K562 (cell line): ENCODE measurements at regions of chr6 and their contacts with region 1.

Region 1: DNA sequence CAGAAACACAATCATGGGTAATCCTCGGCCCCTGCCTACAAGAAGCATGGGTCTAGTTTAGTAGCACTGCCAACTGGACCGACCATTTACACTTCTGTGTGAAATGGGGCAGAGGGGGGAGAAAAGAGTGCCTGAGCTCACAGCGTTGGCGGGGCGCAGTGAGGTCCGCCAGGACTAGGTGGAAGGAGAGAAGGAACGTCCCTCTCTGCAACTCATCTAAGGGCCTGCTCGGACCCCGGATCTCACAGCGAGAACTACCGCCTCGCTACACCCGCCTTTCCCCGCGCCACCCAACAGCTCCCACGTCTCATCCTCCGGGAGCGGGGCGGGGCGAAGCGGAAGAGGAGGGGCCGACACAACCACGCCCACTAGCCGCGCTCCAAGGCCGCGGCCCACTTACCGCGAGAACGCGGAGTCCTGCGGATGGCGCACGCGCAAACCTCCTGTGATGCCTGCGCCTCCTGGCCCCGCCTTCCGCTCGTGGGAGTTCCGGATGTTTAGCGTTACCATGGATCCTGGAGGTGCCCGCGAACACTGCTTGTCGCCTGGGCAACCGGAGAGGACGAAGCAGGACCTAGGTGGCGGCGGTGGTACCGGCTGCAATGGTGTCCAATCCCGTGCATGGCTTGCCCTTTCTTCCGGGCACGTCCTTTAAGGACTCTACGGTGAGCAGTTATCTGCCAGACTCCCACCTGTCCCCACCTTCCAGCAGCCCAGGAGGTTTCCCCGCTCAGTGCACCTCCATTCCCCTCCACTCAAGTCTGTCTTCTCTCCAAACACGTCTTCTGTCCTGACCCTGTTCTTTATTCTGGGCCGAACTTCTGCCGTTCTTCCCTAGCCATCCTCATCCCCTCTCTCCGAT is at the start of gene EFHC1:
- DNase-seq: peak; percentile 97 to 99 (median 98)
- ATAC-seq: peak; percentile 96
- H3K4me3 ChIP-seq: peak within 1 kb of the TSS; percentile 69
- H3K27ac ChIP-seq: peak within 1 kb of the TSS; percentile 75
- H3K4me1 ChIP-seq: peaks cover 24 to 31% of the 10 kb centered on the region in 2 experiments
- H3K27me3 ChIP-seq: no peaks in the 10 kb centered on the region; a peak in 1 of 5 replicates
- CTCF ChIP-seq: peak in 1 of 3 experiments; percentile 29; a peak in 1 of 6 replicates
- EP300 ChIP-seq: no peak
- POLR2A ChIP-seq: peak; percentile 93
- RAD21 ChIP-seq: peak in 1 of 2 experiments; percentile 15; a peak in 1 of 4 replicates
- polyA plus RNA-seq, gene EFHC1: 15.7 to 17.2 TPM

Region 2: DNA sequence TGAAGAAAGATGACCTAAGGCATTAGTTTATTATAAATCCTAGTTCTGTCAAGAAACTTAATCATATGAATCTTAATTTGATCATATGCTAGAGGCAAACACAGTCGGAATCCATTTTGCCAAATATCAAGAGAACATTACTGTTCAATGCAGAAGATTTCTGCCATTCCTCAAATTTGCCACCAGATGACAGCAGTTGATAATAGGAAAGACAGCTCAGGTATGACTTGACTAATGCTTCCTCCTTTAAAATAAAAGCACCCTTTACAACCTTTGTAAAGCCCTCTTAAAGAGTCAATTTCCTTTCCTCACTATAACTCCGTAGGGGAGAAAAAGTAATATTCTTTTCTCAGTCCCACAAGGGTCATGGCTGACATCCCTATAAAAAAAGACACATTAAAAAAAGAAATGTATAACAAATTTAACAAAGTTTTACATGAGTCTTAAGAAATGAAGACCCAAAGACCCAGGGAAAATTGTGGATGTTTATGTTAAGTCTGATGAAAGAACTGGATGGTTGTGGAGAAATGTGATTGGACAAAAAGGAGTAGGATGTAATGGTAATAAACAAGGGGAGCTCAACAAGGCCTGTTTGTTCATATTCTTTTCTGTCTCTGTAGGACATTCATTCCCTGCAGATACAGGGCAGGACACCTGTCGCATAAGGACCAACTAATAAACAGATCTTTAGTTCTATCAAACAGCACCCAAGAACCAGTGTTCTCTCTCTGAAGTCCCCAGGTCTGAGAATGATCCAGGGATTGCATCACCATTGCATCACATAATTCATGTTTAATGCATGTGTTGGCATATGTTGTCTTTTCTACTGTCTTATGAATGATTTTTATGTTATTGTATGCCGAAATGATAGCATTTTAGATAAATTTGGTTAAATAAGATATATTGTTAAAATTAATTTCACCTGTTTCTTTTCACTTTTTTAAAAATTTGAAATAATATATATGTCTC is 256.8 kb before region 1 on chr6:
- CTCF ChIA-PET with region 1: no interaction called
- POLR2A ChIA-PET with region 1: no interaction called
- in situ Hi-C with region 1: no loop called
- intact Hi-C with region 1: loop called (anchors 5 kb)
- DNase-seq: peak in 1 of 4 experiments; percentile 24
- ATAC-seq: peak; percentile 82
- H3K4me3 ChIP-seq: no peak overlapping the region
- H3K27ac ChIP-seq: no peak overlapping the region
- H3K4me1 ChIP-seq: no peaks in the 10 kb centered on the region; a peak in 1 of 5 replicates
- H3K27me3 ChIP-seq: no peaks in the 10 kb centered on the region
- CTCF ChIP-seq: peak; percentile 25 to 79 (median 52); a peak in 4 of 6 replicates
- EP300 ChIP-seq: no peak
- POLR2A ChIP-seq: no peak
- RAD21 ChIP-seq: peak; percentile 83 to 86

Region 3: DNA sequence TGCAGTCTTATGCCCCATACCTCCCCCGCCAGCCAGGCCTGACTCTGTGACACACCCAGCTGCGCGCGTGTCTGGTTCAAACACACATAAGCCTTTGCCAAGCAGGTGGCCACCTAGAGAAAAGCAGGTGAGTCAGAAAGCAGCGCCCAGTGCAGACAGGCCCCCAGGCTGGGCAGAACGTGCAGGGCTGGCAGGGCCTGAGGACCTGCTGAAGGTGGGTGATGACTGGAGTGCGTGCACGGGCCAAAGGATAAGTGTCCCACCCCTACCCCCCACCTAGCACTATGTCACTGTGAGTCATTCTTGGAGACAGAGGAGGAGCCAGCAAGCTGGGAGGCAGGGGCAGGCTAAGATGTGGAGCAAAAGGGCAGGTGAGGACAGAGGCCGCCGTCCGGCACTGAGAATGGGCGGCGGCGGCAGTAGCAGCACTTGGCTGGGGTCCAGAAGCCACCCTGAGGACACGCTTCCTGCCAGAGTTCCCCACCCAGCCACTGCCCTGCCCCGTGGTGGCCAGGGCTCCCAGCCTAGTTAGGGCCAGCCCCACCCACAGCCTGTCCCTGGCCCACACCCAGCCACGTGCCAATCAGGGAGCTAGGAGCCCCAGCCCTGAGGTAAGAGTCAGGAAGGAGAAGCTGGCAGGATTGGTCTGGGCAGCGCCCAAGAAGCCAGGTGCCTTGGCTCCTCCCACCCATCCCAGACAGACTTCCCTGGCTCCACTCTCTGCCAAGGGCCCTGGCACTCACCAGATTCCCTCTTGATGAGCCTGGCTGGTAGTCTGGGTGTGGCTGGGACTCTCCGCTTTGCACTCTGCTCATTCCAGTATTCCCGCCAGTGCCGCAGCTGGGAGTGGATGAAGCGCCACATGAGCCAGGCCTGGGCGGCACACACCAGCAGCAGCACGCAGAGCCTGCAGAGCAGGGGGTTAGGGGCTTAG is 84.1 kb after region 1 on chr6:
- CTCF ChIA-PET with region 1: interaction called, 3 read pairs
- POLR2A ChIA-PET with region 1: no interaction called
- in situ Hi-C with region 1: no loop called
- intact Hi-C with region 1: loop called (anchors 2 kb)
- DNase-seq: peak; percentile 90 to 92 (median 90)
- ATAC-seq: peak; percentile 95
- H3K4me3 ChIP-seq: no peak overlapping the region
- H3K27ac ChIP-seq: peak overlapping the region; percentile 73
- H3K4me1 ChIP-seq: peaks cover 33 to 49% of the 10 kb centered on the region in 2 experiments
- H3K27me3 ChIP-seq: no peaks in the 10 kb centered on the region
- CTCF ChIP-seq: no peak; a peak in 1 of 6 replicates
- EP300 ChIP-seq: peak; percentile 68; the same call in 1 of the 2 replicates
- POLR2A ChIP-seq: no peak; the same call in 1 of the 2 replicates
- RAD21 ChIP-seq: no peak; a peak in 1 of 4 replicates

Region 4: DNA sequence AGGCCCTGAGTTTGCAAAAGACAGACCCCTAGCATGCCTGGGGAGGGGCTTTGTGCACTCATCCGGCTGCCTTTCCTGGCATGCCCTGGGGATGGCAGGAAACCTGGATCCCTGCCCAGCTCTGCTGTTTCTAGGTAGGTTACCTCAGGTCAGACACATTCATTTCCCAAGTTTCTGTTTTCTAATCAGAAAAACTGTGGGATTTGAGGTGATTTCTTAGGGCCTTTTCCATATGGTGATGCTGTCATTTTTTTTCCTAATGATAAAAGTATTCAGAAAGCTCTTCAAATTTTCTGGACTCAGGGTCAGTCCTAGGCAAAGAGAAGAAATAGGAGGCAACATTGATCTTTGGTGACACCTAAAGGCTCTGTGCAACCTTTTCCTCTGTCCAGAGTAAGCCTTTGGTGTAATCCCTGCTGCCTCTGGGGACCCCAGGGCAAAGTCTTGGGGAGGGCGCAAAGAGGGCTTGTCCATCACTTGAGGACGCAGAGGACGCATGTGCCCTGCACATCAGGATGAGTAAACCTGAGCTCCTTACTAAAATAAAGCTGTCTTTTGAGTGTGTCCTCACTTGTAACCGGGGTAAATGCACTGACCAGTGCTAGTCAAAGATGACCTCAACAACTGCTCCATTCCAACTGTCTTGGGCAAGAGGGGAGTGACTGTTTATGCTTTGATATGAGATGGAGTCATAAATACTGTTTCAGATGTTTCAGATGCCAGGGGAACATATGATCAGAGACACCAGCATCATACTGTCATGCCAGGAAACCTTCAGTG is 170.3 kb after region 1 on chr6:
- CTCF ChIA-PET with region 1: interaction called, 14 read pairs
- POLR2A ChIA-PET with region 1: interaction called, 3 read pairs
- in situ Hi-C with region 1: loop called (anchors 5 kb)
- intact Hi-C with region 1: loop called (anchors 1 kb)
- DNase-seq: no peak
- ATAC-seq: peak; percentile 86
- H3K4me3 ChIP-seq: no peak overlapping the region
- H3K27ac ChIP-seq: no peak overlapping the region
- H3K4me1 ChIP-seq: peaks cover 0 to 8% of the 10 kb centered on the region in 2 experiments; a peak in 2 of 5 replicates
- H3K27me3 ChIP-seq: no peaks in the 10 kb centered on the region; a peak in 1 of 5 replicates
- CTCF ChIP-seq: peak; percentile 32 to 55 (median 34); a peak in 5 of 6 replicates
- EP300 ChIP-seq: no peak
- POLR2A ChIP-seq: no peak
- RAD21 ChIP-seq: peak; percentile 58 to 76

Region 5: DNA sequence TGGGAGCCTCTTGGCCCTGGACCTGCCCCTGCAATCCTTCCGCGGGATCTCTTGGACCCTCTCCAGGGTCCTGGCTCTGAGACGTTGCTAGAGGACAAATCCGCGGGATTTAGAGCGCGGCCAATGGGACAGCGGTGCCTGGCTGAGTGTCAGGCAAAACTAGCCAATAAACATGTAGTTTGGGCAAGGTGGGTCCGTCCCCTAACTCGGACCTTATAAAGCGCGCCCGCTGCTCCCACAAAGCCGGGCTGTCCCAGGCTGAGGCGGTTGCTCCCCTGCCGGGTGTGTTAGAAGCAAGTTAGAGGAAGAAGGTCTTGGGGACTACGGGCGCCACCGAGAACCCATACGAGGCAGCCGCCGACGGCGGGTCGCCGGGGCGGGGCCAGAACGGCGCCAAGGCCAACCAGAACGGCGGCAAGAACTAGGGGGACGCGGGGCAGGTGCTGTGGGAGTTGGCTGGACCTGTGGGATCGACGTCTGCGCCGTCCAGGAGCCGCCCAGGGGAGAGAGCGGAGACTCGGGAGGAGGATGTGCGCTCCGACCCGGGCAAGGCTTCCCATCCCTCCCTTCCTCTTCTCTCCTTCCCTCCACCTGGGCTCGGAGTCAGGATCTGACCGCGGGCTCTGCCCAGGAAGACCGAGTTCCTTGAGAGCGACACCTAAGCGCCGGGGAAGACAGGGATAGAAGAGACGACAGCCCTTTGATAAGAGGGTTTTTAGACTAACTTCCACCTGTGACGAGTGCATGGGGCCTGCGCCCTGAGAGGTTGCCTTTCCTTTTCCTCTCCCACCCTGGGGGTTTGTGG is 244.3 kb after region 1 on chr6:
- CTCF ChIA-PET with region 1: interaction called, 74 read pairs
- POLR2A ChIA-PET with region 1: interaction called, 6 read pairs
- in situ Hi-C with region 1: loop called (anchors 5 kb)
- intact Hi-C with region 1: loop called (anchors 1 kb)
- DNase-seq: peak; percentile 90 to 98 (median 94)
- ATAC-seq: peak; percentile 98
- H3K4me3 ChIP-seq: peak overlapping the region; percentile 63
- H3K27ac ChIP-seq: peak overlapping the region; percentile 59
- H3K4me1 ChIP-seq: peaks cover 7 to 13% of the 10 kb centered on the region in 2 experiments; a peak in 4 of 5 replicates
- H3K27me3 ChIP-seq: no peaks in the 10 kb centered on the region
- CTCF ChIP-seq: no peak
- EP300 ChIP-seq: no peak
- POLR2A ChIP-seq: peak; percentile 94
- RAD21 ChIP-seq: no peak

Region 6: DNA sequence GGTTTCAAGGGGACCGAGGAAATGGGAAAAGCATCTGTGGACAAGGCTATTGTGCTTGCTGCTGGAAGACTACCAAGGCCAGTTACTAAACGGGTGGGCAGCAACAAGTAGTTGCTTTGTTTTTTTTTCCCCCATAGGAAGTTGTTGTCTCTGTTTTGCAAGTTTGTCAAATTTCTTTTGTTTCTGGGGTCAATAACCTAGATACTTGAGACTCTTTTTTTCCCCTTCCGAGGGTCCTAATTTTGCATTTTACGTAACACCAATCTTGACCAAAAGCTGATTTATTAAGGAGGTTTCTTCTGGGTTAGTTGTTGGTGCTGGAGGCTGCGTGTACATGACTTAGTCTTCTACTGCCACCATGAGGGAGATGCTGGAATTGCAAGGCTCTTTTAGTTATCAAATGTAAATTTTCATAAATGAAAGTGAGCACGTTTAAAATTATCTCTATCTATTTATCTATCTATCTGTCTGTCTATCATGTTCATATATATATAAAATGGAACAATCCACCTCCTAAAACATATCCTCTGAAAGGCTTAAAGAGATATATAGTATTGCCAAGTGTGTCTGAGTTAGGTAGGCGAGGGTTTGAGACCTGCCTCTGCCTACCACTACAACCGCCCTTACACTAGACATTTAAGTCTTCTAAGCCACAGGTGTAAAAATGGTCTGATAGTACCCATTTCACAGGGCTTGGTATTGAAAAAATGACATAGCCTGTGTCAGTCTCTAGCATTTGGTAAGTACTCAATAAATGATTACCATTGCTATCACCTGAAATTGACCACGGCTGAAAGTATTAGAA is 1064.6 kb after region 1 on chr6:
- CTCF ChIA-PET with region 1: no interaction called
- POLR2A ChIA-PET with region 1: no interaction called
- in situ Hi-C with region 1: loop called (anchors 25 kb)
- intact Hi-C with region 1: loop called (anchors 10 kb)
- DNase-seq: peak; percentile 36 to 75 (median 56)
- ATAC-seq: peak; percentile 81
- H3K4me3 ChIP-seq: no peak overlapping the region
- H3K27ac ChIP-seq: no peak overlapping the region
- H3K4me1 ChIP-seq: peaks cover 0 to 15% of the 10 kb centered on the region in 2 experiments; a peak in 2 of 5 replicates
- H3K27me3 ChIP-seq: no peaks in the 10 kb centered on the region; a peak in 1 of 5 replicates
- CTCF ChIP-seq: peak; percentile 84 to 98 (median 85)
- EP300 ChIP-seq: no peak
- POLR2A ChIP-seq: no peak
- RAD21 ChIP-seq: peak; percentile 94 to 98